Naive thymus-derived CD4-positive, alpha-beta T cell (primary cell): ENCODE measurements at regions of chr6 and their contacts with region 1.

Region 1: DNA sequence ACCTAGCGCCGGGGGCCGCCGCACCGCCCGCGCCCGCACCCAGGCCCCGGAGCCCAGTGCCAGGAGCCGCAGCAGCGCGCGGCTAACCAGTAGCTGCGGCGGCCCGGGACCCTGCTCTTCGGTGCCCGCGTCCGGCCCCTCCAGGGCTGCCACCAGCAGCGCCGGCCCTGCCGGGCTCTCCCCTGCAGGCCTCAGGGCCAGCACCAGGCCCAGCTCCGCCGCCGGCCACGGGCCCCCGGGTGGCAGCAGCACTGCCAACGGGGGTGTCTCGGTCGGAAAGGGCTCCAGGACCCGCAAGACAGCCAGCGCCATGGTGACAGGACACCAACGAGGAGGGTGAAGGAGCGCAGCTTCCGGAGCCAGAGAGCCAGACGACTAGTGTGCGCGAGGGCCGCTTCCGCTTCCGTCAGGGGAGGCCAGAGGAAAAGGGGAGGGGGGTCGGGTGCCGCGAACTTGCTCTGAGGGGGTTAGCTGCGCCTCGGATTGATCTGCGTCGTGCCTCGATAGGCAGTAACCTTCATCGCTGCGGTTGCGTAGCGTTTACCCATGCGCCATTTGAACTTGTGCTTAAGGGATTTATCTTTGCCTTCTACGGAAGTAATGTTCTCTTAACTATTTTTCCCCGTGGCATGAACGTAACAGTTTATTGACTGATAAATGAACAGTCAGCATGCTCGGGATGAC is at the start of gene PEX6:
- DNase-seq: peak; percentile 77 to 98 (median 93)
- ATAC-seq: peak; percentile 97
- H3K4me3 ChIP-seq: peak within 1 kb of the TSS; percentile 90
- H3K4me3 Mint-ChIP-seq: peak within 1 kb of the TSS; percentile 91 to 99 (median 94)
- H3K27ac ChIP-seq: peak within 1 kb of the TSS; percentile 85
- H3K27ac Mint-ChIP-seq: peak within 1 kb of the TSS; percentile 92 to 99 (median 98)
- H3K4me1 ChIP-seq: peaks cover 30 to 32% of the 10 kb centered on the region in 2 donors
- H3K4me1 Mint-ChIP-seq: peaks cover 19 to 61% (median 47%) of the 10 kb centered on the region in 7 donors
- H3K27me3 ChIP-seq: no peaks in the 10 kb centered on the region
- H3K27me3 Mint-ChIP-seq: no peaks in the 10 kb centered on the region
- total RNA-seq, gene PEX6: 14.1 to 42.3 (median 28.0) TPM

Region 2: GRCh38 chr6:42782622-42783176 is 196.3 kb before region 1 on chr6:
- CTCF ChIA-PET with region 1: no interaction called
- POLR2A ChIA-PET with region 1: interaction called, 5 read pairs
- intact Hi-C with region 1: loop called in 1 of 2 experiments (anchors 10 kb)
- DNase-seq: peak in 8 of 9 donors; percentile 65 to 88 (median 82)
- ATAC-seq: peak; percentile 75
- H3K4me3 ChIP-seq: peak overlapping the region; percentile 89
- H3K4me3 Mint-ChIP-seq: peak overlapping the region in 8 of 10 donors; percentile 89 to 100 (median 98)
- H3K27ac ChIP-seq: peak overlapping the region; percentile 100
- H3K27ac Mint-ChIP-seq: peak overlapping the region in 5 of 9 donors; percentile 99 to 100 (median 100)
- H3K4me1 ChIP-seq: peaks cover 36 to 45% of the 10 kb centered on the region in 2 donors
- H3K4me1 Mint-ChIP-seq: peaks cover under 1 to 35% (median 30%) of the 10 kb centered on the region in 7 donors
- H3K27me3 ChIP-seq: no peaks in the 10 kb centered on the region
- H3K27me3 Mint-ChIP-seq: no peaks in the 10 kb centered on the region

Region 3: GRCh38 chr6:42890311-42891198 is 88.4 kb before region 1 on chr6:
- CTCF ChIA-PET with region 1: no interaction called
- POLR2A ChIA-PET with region 1: interaction called, 3 read pairs
- intact Hi-C with region 1: loop called (anchors 1 to 5 kb)
- DNase-seq: peak; percentile 70 to 90 (median 87)
- ATAC-seq: peak; percentile 99
- H3K4me3 ChIP-seq: peak overlapping the region; percentile 89
- H3K4me3 Mint-ChIP-seq: peak overlapping the region; percentile 94 to 100 (median 98)
- H3K27ac ChIP-seq: peak overlapping the region; percentile 87
- H3K27ac Mint-ChIP-seq: peak overlapping the region; percentile 89 to 99 (median 98)
- H3K4me1 ChIP-seq: peaks cover 0 to 8% of the 10 kb centered on the region in 2 donors
- H3K4me1 Mint-ChIP-seq: peaks cover 0 to 26% (median 14%) of the 10 kb centered on the region in 7 donors
- H3K27me3 ChIP-seq: no peaks in the 10 kb centered on the region
- H3K27me3 Mint-ChIP-seq: no peaks in the 10 kb centered on the region

Region 4: DNA sequence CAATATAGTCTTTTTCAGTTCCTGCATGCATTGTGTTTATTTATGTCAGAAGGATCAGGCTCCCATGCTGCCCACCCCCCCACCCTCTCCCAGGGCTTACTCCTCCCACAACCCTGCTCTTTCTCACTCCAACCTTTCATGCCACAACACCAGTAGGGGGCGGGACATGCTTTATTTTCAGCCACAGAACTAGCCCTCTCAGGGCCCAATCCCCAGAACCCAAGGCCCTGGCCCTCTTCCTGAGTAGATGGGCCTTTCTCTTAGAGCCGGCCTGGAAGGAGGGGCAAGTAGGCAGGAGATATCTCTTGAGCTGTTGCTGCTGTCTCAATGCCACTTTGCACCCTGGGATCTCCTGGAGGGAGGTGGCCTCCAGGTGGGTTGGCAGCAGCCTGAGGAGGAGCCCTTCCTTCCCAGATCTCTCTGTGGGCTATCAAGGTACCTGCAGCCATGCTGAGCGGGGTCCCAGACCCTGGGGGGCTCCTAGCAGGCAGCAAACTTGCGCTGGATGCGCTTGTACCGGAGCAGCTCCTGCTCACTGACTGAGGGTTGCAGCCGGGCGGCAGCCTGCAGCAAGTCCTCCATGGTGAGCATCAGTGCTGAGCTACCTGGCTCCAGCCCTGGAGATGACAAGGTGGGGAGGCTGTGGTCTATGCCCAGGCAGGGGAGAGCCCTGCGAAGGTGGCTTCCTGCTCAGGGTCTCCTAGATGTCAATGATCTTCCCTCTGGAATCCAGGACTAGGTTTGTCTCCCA is 15.0 kb before region 1 on chr6:
- CTCF ChIA-PET with region 1: interaction called, 4 read pairs
- POLR2A ChIA-PET with region 1: interaction called, 13 read pairs
- intact Hi-C with region 1: loop called in 1 of 2 experiments (anchors 2 kb)
- DNase-seq: peak in 5 of 9 donors; percentile 14 to 46 (median 23)
- ATAC-seq: peak; percentile 43
- H3K4me3 ChIP-seq: no peak overlapping the region
- H3K4me3 Mint-ChIP-seq: no peak overlapping the region
- H3K27ac ChIP-seq: no peak overlapping the region
- H3K27ac Mint-ChIP-seq: no peak overlapping the region
- H3K4me1 ChIP-seq: peaks cover 0 to 5% of the 10 kb centered on the region in 2 donors
- H3K4me1 Mint-ChIP-seq: peaks cover 0 to 24% (median 16%) of the 10 kb centered on the region in 7 donors
- H3K27me3 ChIP-seq: no peaks in the 10 kb centered on the region
- H3K27me3 Mint-ChIP-seq: peaks cover 0 to 18% (median 0%) of the 10 kb centered on the region in 5 donors

Region 5: GRCh38 chr6:43021270-43022047 is 42.5 kb after region 1 on chr6 and contains the start of gene RRP36:
- CTCF ChIA-PET with region 1: no interaction called
- POLR2A ChIA-PET with region 1: interaction called, 70 read pairs
- intact Hi-C with region 1: no loop called
- DNase-seq: peak; percentile 33 to 76 (median 51)
- ATAC-seq: peak; percentile 88
- H3K4me3 ChIP-seq: peak within 1 kb of the TSS; percentile 89
- H3K4me3 Mint-ChIP-seq: peak within 1 kb of the TSS; percentile 95 to 99 (median 98)
- H3K27ac ChIP-seq: peak within 1 kb of the TSS; percentile 81
- H3K27ac Mint-ChIP-seq: peak within 1 kb of the TSS; percentile 74 to 97 (median 93)
- H3K4me1 ChIP-seq: peaks cover 11 to 19% of the 10 kb centered on the region in 2 donors
- H3K4me1 Mint-ChIP-seq: peaks cover 23 to 60% (median 41%) of the 10 kb centered on the region in 7 donors
- H3K27me3 ChIP-seq: no peaks in the 10 kb centered on the region
- H3K27me3 Mint-ChIP-seq: no peaks in the 10 kb centered on the region
- total RNA-seq, gene RRP36: 25.4 to 66.3 (median 48.4) TPM

Region 6: DNA sequence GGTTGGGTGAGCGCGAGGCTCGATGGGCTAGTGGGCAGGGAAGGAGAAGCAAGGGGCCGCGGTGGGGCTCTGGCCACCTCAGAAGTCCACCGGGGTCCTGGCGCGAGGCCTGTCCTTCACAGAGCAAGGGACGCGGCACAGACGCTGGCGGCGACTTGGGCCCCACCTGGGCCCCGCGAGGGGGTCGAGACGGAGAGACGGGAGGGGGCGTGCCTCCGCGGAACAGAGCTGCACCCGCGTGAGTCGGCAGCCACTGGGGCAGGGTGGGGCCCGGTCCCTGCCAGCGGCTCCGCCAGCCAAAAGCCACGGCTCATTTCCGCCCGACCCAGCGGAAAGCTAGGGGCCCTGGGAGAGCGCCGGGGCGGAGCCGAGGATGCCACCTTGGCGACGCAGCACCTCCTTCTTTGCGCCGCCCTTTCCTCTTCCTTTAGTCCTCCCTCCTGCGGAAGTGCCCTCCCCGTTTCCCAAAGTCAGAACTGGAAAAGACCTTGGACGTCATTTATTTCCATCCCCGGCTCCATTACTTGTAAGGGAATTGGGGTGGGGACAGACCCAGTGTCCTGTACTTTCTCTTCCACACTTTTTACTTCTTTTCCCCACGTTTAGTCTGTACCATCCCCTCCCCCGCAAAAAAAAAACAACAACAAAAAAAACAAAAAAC is 74.7 kb after region 1 on chr6 and contains the start of gene CUL7:
- CTCF ChIA-PET with region 1: no interaction called
- POLR2A ChIA-PET with region 1: interaction called, 24 read pairs
- intact Hi-C with region 1: loop called (anchors 1 kb)
- DNase-seq: peak; percentile 72 to 90 (median 88)
- ATAC-seq: peak; percentile 99
- H3K4me3 ChIP-seq: peak within 1 kb of the TSS; percentile 70
- H3K4me3 Mint-ChIP-seq: peak within 1 kb of the TSS; percentile 86 to 99 (median 94)
- H3K27ac ChIP-seq: peak within 1 kb of the TSS; percentile 89
- H3K27ac Mint-ChIP-seq: peak within 1 kb of the TSS; percentile 92 to 99 (median 97)
- H3K4me1 ChIP-seq: peaks cover 8 to 24% of the 10 kb centered on the region in 2 donors
- H3K4me1 Mint-ChIP-seq: peaks cover 37 to 58% (median 50%) of the 10 kb centered on the region in 7 donors
- H3K27me3 ChIP-seq: no peaks in the 10 kb centered on the region
- H3K27me3 Mint-ChIP-seq: no peaks in the 10 kb centered on the region
- total RNA-seq, gene CUL7: 9.8 to 14.5 (median 12.7) TPM

Region 7: DNA sequence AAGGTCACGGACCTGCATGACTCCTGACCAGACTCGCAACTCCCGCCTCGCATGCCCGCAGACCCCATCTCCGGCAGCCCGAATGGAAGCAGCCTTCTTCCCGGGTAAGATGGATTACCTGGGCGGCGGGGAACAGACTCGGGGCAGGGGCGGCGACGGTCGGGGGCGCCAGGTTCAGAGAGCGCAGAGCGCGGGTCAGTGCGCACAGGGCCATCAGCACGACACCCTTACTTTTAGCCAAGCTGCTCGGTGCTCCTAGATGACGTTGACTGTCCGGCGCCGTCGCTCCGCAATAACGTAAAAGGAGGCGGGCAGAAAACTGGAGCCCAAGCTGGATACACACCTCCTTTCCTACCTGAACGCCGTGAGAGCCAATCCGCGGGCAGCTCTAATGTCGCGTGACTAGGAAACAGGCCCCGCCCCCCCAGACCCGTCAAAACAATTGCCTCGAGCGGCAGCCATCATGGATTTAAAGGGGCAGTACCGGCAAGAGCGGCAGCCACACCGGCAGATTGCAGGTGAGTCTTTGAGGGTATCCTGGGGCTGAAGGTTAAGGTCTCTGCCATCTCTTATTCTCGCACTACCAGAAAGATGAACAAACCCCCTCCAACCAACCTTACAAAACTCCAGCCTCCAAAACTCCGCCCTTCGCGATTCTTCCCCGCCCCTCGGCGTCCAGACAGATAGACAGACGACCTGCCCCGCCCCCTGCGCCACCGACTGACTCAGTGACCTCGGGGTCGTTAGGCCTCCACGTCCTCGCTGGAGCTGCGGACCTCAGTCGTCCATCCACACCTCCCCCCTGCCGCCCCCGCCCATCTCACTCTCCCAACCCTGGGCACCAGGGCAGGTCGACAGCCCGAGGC is 80.4 kb after region 1 on chr6 and contains the starts of genes KLC4 and MRPL2:
- CTCF ChIA-PET with region 1: no interaction called
- POLR2A ChIA-PET with region 1: interaction called, 24 read pairs
- intact Hi-C with region 1: loop called in 1 of 2 experiments (anchors 1 kb)
- DNase-seq: peak; percentile 79 to 98 (median 95)
- ATAC-seq: peak; percentile 99
- H3K4me3 ChIP-seq: peak within 1 kb of the TSS; percentile 80
- H3K4me3 Mint-ChIP-seq: peak within 1 kb of the TSS; percentile 88 to 100 (median 96)
- H3K27ac ChIP-seq: peak within 1 kb of the TSS; percentile 88
- H3K27ac Mint-ChIP-seq: peak within 1 kb of the TSS; percentile 95 to 100 (median 99)
- H3K4me1 ChIP-seq: peaks cover 0 to 21% of the 10 kb centered on the region in 2 donors
- H3K4me1 Mint-ChIP-seq: peaks cover 28 to 50% (median 45%) of the 10 kb centered on the region in 7 donors
- H3K27me3 ChIP-seq: no peaks in the 10 kb centered on the region
- H3K27me3 Mint-ChIP-seq: no peaks in the 10 kb centered on the region
- total RNA-seq, gene KLC4: 16.5 to 56.9 (median 42.5) TPM
- total RNA-seq, gene MRPL2: 32.0 to 57.5 (median 47.7) TPM